ENCODE measurements at regions of chr3 and their contacts with region 1.

Region 1: GRCh38 chr3:16033889-16034687 is 140.4 kb upstream of the GALNT15 start:
- DNase-seq: no peak
- H3K4me3 ChIP-seq: no peak overlapping the region
- H3K27ac ChIP-seq: no peak overlapping the region
- H3K4me1 ChIP-seq: no peaks in the 10 kb centered on the region
- H3K27me3 ChIP-seq: no peaks in the 10 kb centered on the region
- CTCF ChIP-seq: no peak
- POLR2A ChIP-seq: no peak

Region 2: DNA sequence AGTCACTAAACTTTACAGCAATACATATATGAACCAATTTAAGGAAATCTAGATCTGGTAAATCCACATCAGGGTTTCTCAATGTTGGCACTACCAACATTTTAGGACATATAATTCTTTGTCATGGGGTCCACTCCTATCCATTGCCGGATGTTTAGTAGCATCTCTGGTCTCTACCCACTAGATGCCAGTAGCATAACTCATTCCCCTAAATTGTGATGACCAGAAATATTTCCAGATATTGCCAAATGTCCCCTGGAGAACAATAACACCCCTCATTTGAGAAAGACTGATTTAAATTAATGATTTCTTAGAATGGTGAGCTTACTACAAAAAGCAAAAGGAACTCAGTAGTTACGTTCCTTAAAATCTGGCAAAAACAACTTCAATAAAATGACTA is 213.2 kb before region 1 on chr3:
- intact Hi-C with region 1: loop called in 1 of 2 experiments (anchors 10 kb)
- DNase-seq: no peak
- H3K4me3 ChIP-seq: no peak overlapping the region
- H3K27ac ChIP-seq: no peak overlapping the region
- H3K4me1 ChIP-seq: peaks cover 0 to 8% of the 10 kb centered on the region in 2 donors
- H3K27me3 ChIP-seq: no peaks in the 10 kb centered on the region
- CTCF ChIP-seq: no peak
- POLR2A ChIP-seq: no peak

Region 3: GRCh38 chr3:15982667-15983145 is 51.4 kb before region 1 on chr3:
- intact Hi-C with region 1: no loop called
- DNase-seq: peak in 1 of 7 donors; percentile 53
- H3K4me3 ChIP-seq: no peak overlapping the region
- H3K27ac ChIP-seq: no peak overlapping the region
- H3K4me1 ChIP-seq: no peaks in the 10 kb centered on the region
- H3K27me3 ChIP-seq: no peaks in the 10 kb centered on the region
- CTCF ChIP-seq: no peak
- POLR2A ChIP-seq: no peak

Region 4: GRCh38 chr3:16214366-16214765 is 180.3 kb after region 1 on chr3:
- intact Hi-C with region 1: no loop called
- DNase-seq: no peak
- H3K4me3 ChIP-seq: no peak overlapping the region
- H3K27ac ChIP-seq: no peak overlapping the region
- H3K4me1 ChIP-seq: peaks cover 0 to 10% of the 10 kb centered on the region in 2 donors
- H3K27me3 ChIP-seq: no peaks in the 10 kb centered on the region
- CTCF ChIP-seq: no peak
- POLR2A ChIP-seq: no peak

Measured in adrenal gland (tissue), 19 donors.